ENCODE measurements at regions of chr2 and their contacts with region 1.

Region 1: GRCh38 chr2:219073413-219074129 is 12.8 kb upstream of the IHH start:
- DNase-seq: no peak
- ATAC-seq: no peak
- H3K4me3 Mint-ChIP-seq: no peak overlapping the region
- H3K27ac Mint-ChIP-seq: no peak overlapping the region
- H3K4me1 Mint-ChIP-seq: no peaks in the 10 kb centered on the region
- H3K27me3 Mint-ChIP-seq: no peaks in the 10 kb centered on the region

Region 2: DNA sequence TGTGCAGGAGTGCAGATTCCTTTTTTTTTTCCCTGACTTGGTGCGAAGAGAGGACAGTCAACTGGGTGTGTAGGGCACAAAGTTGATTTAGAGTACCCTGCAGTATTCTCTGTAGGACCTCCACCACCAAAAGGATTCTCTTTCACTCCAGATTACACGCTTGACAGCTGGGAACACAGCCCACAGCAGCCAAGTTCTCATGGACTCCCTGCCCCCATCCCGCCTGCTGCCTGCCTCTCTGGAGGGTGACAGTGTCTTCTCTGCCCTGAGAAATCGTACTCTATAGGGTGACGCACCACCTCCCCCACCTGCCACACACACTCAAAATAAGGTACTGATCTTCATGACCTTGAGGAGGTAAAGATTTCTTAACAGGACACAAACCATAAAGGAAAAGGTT is 13.8 kb after region 1 on chr2:
- CTCF ChIA-PET with region 1: interaction called, 10 read pairs
- DNase-seq: no peak
- ATAC-seq: no peak
- H3K4me3 Mint-ChIP-seq: no peak overlapping the region
- H3K27ac Mint-ChIP-seq: no peak overlapping the region
- H3K4me1 Mint-ChIP-seq: peaks cover 16% of the 10 kb centered on the region
- H3K27me3 Mint-ChIP-seq: no peaks in the 10 kb centered on the region

Region 3: GRCh38 chr2:219104107-219105035 is 30.8 kb after region 1 on chr2:
- CTCF ChIA-PET with region 1: interaction called, 15 read pairs
- DNase-seq: no peak
- ATAC-seq: peak; percentile 57
- H3K4me3 Mint-ChIP-seq: no peak overlapping the region
- H3K27ac Mint-ChIP-seq: no peak overlapping the region
- H3K4me1 Mint-ChIP-seq: peaks cover 3% of the 10 kb centered on the region
- H3K27me3 Mint-ChIP-seq: no peaks in the 10 kb centered on the region

Measured in activated CD8-positive, alpha-beta memory T cell treated with anti-CD3 and anti-CD28 coated beads, Interleukin-2, amount 10 ng/mL, durations not matched to agents 7 days and 5 days (primary cell).